IMR-90 (cell line): ENCODE measurements at regions of chr4 and their contacts with region 1.

Region 1: GRCh38 chr4:149264093-149264733 is 551.4 kb downstream of the IQCM start:
- DNase-seq: peak; percentile 74
- ATAC-seq: peak; percentile 92
- H3K4me3 ChIP-seq: no peak overlapping the region
- H3K27ac ChIP-seq: no peak overlapping the region
- H3K4me1 ChIP-seq: no peaks in the 10 kb centered on the region
- H3K27me3 ChIP-seq: no peaks in the 10 kb centered on the region
- CTCF ChIP-seq: peak; percentile 72
- POLR2A ChIP-seq: peak; percentile 43; the same call in 1 of the 2 replicates
- RAD21 ChIP-seq: peak; percentile 91

Region 2: GRCh38 chr4:147933316-147933715 is 1330.9 kb before region 1 on chr4:
- CTCF ChIA-PET with region 1: no interaction called
- POLR2A ChIA-PET with region 1: no interaction called
- dilution Hi-C with region 1: no loop called
- in situ Hi-C with region 1: no loop called
- intact Hi-C with region 1: loop called (anchors 10 kb)
- DNase-seq: peak; percentile 59
- ATAC-seq: peak; percentile 67
- H3K4me3 ChIP-seq: no peak overlapping the region
- H3K27ac ChIP-seq: no peak overlapping the region
- H3K4me1 ChIP-seq: peaks cover 4% of the 10 kb centered on the region
- H3K27me3 ChIP-seq: no peaks in the 10 kb centered on the region
- CTCF ChIP-seq: peak; percentile 53
- POLR2A ChIP-seq: no peak
- RAD21 ChIP-seq: peak; percentile 62

Region 3: DNA sequence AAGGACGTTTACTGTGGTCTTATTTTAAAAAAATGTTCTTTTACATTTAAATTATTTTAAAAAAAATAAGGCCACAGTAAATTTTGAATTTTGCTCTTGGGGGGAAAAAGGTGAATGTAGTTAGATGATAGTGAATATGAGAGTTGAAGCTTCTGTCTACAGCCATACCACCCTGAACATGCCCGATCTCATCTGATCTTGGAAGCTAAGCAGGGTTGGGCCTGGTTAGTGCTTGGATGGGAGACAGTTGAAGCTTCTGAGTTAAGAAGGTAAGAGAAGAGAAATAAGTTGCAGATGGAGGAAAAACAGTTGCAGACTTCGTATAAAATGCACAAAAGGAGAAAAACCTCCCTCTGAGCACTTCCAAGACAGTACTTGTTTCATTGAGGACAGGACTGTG is 706.4 kb before region 1 on chr4:
- CTCF ChIA-PET with region 1: no interaction called
- POLR2A ChIA-PET with region 1: no interaction called
- dilution Hi-C with region 1: no loop called
- in situ Hi-C with region 1: no loop called
- intact Hi-C with region 1: loop called (anchors 10 kb)
- DNase-seq: no peak
- ATAC-seq: no peak
- H3K4me3 ChIP-seq: no peak overlapping the region
- H3K27ac ChIP-seq: no peak overlapping the region
- H3K4me1 ChIP-seq: no peaks in the 10 kb centered on the region
- H3K27me3 ChIP-seq: no peaks in the 10 kb centered on the region
- CTCF ChIP-seq: no peak
- POLR2A ChIP-seq: no peak
- RAD21 ChIP-seq: no peak

Region 4: DNA sequence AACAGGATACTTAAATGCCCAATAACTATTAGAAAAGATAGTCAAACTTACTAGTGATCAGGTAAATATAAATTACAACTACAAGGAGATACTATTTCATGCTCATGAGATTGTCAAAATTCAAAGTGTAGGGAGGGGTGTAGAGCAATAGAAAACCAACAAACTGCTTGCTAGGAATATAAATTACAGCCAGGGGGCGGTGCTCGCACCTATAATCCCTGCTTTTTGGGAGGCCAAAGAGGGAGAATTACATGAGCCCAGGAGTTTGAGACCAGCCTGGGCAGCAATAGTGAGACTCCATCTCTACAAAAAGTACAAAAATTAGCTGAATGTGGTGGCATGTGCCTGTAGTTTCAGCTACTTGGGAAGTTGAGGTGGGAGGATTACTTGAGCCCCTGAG is 265.5 kb before region 1 on chr4:
- CTCF ChIA-PET with region 1: no interaction called
- POLR2A ChIA-PET with region 1: no interaction called
- dilution Hi-C with region 1: no loop called
- in situ Hi-C with region 1: loop called (anchors 10 kb)
- intact Hi-C with region 1: loop called (anchors 1 kb)
- DNase-seq: peak; percentile 17
- ATAC-seq: peak; percentile 51; the same call in 1 of the 2 replicates
- H3K4me3 ChIP-seq: no peak overlapping the region
- H3K27ac ChIP-seq: no peak overlapping the region
- H3K4me1 ChIP-seq: no peaks in the 10 kb centered on the region
- H3K27me3 ChIP-seq: no peaks in the 10 kb centered on the region
- CTCF ChIP-seq: peak; percentile 54
- POLR2A ChIP-seq: no peak
- RAD21 ChIP-seq: peak; percentile 65

Region 5: GRCh38 chr4:149897783-149898182 is 633.6 kb after region 1 on chr4:
- CTCF ChIA-PET with region 1: no interaction called
- POLR2A ChIA-PET with region 1: no interaction called
- dilution Hi-C with region 1: no loop called
- in situ Hi-C with region 1: no loop called
- intact Hi-C with region 1: loop called (anchors 2 kb)
- DNase-seq: peak; percentile 26
- ATAC-seq: peak; percentile 77
- H3K4me3 ChIP-seq: no peak overlapping the region
- H3K27ac ChIP-seq: no peak overlapping the region
- H3K4me1 ChIP-seq: no peaks in the 10 kb centered on the region
- H3K27me3 ChIP-seq: no peaks in the 10 kb centered on the region
- CTCF ChIP-seq: peak; percentile 59
- POLR2A ChIP-seq: no peak
- RAD21 ChIP-seq: peak; percentile 73